MCF 10A (cell line): ENCODE measurements at regions of chr18 and their contacts with region 1.

Region 1: DNA sequence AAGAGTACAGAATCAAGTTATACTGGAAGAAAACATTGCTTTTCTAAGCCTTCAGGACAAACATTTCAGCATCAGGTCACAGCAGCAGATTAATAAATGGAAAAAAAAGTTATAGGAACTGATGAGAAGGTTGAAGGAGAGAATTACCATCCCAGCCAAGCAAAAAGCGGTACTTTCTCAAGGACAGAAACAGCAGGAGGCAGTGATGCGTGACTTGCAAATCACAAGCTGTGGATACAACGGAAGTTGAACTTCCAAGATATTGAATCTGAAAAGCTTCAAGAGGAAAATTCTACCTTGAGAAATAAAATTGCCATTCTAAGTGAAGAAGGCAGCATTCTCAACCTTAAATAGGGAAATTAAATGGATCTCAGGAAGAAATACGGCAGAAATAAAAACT is 18.5 kb upstream of the SERPINB12 start:
- DNase-seq: no peak
- H3K4me3 Mint-ChIP-seq: no peak overlapping the region
- H3K27ac Mint-ChIP-seq: no peak overlapping the region
- H3K4me1 Mint-ChIP-seq: peaks cover 6% of the 10 kb centered on the region
- H3K27me3 Mint-ChIP-seq: no peaks in the 10 kb centered on the region
- CTCF ChIP-seq: no peak

Region 2: GRCh38 chr18:63511286-63511685 is 12.4 kb before region 1 on chr18:
- CTCF ChIA-PET with region 1: interaction called, 28 read pairs
- POLR2A ChIA-PET with region 1: interaction called, 3 read pairs
- intact Hi-C with region 1: no loop called
- DNase-seq: peak; percentile 75
- H3K4me3 Mint-ChIP-seq: no peak overlapping the region
- H3K27ac Mint-ChIP-seq: no peak overlapping the region
- H3K4me1 Mint-ChIP-seq: peaks cover 6% of the 10 kb centered on the region
- H3K27me3 Mint-ChIP-seq: no peaks in the 10 kb centered on the region
- CTCF ChIP-seq: peak; percentile 39